ENCODE measurements at regions of chr22 and their contacts with region 1.

Region 1: DNA sequence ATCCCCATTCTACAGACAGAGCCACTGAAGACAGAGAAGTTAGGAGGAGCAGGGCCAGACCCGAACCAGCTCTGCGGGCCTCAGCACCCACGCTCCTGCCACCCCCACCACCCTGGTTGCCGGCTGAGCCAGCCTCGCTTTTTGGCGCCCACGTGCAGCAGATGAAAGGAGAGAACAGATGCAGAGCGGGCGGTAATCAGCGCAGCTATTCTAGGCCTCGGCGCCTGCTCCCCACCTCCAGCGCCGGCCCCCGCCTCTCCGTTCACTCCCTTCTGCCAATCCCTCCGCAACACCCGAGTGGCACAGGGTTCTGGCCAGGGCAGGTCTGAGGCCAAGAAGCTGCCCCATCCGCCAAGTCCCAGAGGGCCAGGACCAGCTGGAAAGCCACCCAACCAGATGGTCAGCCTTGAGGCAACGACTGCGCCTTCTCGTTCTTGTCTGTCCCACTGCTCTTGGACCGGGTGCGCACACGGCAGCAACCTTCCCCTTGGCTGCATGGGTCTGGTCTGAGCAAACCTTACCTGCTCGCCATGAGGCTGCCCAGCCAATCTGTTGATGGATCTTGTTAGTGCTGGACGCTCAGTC is 16.8 kb downstream of the DNAL4 start:
- DNase-seq: peak in 7 of 10 donors; percentile 50 to 83 (median 72)
- H3K4me3 ChIP-seq: no peak overlapping the region
- H3K27ac ChIP-seq: peak overlapping the region in 38 of 59 donors; percentile 0 to 80 (median 52)
- H3K27me3 ChIP-seq: no peaks in the 10 kb centered on the region
- CTCF ChIP-seq: no peak

Region 2: DNA sequence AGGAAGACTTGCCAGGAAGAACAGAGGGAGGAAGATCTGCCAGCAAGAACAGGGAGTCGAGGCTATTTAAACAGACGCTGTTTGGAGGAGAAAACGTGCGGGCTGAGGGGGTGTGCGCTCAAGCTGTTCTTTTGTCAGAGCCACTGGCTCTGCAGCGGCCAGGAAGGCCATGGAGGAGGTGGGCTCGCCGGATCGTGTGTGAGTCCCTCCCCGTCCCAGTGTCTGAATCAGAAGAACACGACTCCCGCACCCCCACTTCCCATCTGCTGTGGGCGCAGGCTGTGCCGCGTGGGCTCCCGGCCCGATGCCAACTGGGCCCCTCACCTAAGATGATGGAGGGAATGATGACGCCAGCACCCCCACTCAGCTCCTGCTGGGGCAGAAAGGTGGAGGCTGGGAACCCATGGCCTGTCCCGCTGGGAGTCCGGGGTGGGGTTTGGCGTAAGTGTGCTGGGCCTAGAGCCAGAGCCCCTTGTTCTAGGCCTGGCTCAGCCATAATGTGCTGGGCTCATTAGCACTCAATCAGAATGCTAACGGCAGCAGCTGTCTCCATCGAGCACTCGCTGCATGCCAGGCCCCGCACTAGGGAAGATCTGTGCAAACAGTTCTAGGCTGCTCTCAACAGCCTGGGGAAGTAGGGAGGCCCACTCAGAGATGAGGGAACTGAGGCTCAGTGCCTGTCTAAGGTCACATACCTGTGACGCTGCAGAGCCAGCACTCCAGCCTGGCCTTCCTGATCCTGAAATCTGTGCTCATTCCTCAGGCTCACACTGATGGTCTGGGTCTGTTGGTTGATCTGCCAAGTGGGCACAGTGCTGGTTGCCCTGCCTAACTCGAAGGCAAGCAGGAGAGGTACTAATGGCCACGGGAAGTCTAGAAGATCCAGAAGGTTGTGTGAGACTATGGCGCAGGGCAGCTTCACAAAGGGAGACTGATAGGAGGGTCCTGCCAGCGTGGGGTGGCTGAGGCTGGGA is 55.1 kb after region 1 on chr22:
- intact Hi-C with region 1: loop called (anchors 1 to 2 kb)
- DNase-seq: peak in 9 of 10 donors; percentile 33 to 81 (median 74)
- H3K4me3 ChIP-seq: peak overlapping the region in 2 of 59 donors; percentile 1 to 5
- H3K27ac ChIP-seq: peak overlapping the region in 51 of 59 donors; percentile 18 to 87 (median 64)
- H3K27me3 ChIP-seq: no peaks in the 10 kb centered on the region
- CTCF ChIP-seq: no peak

Region 3: GRCh38 chr22:38872172-38872830 is 95.1 kb after region 1 on chr22 and contains the start of gene CBX6:
- intact Hi-C with region 1: no loop called
- DNase-seq: peak; percentile 91 to 96 (median 94)
- H3K4me3 ChIP-seq: peak within 1 kb of the TSS; percentile 60 to 98 (median 85)
- H3K27ac ChIP-seq: peak within 1 kb of the TSS; percentile 86 to 100 (median 99)
- H3K27me3 ChIP-seq: no peaks in the 10 kb centered on the region
- CTCF ChIP-seq: peak in 4 of 56 donors; percentile 3 to 17 (median 7)
- total RNA-seq, gene CBX6: 99.9 to 293 (median 188) TPM

Region 4: DNA sequence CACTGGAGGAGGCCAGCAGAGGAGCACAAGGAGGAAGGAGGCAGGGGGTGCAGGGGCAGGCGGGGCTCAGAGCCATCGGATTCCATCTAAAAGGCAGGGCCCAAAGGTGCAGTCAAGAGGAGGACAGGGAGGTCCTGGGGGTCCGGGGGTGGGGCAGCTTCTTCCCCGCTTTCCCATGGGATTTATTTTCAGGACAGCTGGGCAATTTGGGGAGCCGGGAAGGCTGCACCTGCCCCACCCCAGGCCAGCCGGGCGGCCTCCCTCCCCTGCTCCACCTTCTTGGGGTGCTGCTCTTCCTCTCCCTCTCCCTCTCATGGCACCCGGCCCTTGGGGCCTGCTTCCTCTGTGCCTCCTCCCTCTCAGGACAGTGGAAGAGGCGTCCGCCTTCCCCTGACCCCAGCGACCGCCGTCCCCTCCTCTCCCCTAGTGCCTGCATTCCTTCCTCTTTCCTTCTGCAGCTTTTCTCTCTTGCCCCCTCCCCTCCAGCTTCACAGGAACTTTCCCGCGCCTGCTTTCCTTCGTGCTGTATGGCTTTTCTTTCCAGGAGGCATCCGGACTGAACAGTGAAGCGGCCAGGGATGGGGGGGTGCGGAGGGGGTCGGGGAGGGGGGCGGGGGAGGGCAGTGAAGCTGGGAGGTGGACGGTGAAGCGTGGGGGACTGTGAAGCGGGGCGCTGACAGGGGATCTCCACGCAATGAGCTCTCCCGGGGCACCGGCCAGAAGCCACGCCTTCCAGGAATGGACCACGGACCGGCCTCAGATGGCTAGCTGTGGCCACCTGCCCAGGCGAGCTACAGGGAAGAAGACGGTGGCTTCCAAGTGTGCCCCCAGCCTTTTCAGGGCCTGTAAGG is 346.8 kb after region 1 on chr22:
- intact Hi-C with region 1: loop called in 1 of 2 experiments (anchors 5 kb)
- DNase-seq: no peak
- H3K4me3 ChIP-seq: no peak overlapping the region
- H3K27ac ChIP-seq: no peak overlapping the region
- H3K27me3 ChIP-seq: no peaks in the 10 kb centered on the region
- CTCF ChIP-seq: no peak

Region 5: GRCh38 chr22:39130892-39131850 is 354.0 kb after region 1 on chr22:
- intact Hi-C with region 1: loop called in 1 of 2 experiments (anchors 5 kb)
- DNase-seq: peak in 2 of 10 donors; percentile 23 to 29
- H3K4me3 ChIP-seq: no peak overlapping the region
- H3K27ac ChIP-seq: peak overlapping the region in 28 of 59 donors; percentile 1 to 57 (median 34)
- H3K27me3 ChIP-seq: no peaks in the 10 kb centered on the region
- CTCF ChIP-seq: no peak

Measured in dorsolateral prefrontal cortex (tissue), 120 donors.